ENCODE measurements at regions of chr6 and their contacts with region 1.

Region 1: GRCh38 chr6:79196912-79197311 is 37.6 kb downstream of the HMGN3 start:
- H3K4me3 Mint-ChIP-seq: no peak overlapping the region
- H3K27ac Mint-ChIP-seq: peak overlapping the region; percentile 25
- H3K4me1 Mint-ChIP-seq: peaks cover 13% of the 10 kb centered on the region
- H3K27me3 Mint-ChIP-seq: no peaks in the 10 kb centered on the region

Region 2: DNA sequence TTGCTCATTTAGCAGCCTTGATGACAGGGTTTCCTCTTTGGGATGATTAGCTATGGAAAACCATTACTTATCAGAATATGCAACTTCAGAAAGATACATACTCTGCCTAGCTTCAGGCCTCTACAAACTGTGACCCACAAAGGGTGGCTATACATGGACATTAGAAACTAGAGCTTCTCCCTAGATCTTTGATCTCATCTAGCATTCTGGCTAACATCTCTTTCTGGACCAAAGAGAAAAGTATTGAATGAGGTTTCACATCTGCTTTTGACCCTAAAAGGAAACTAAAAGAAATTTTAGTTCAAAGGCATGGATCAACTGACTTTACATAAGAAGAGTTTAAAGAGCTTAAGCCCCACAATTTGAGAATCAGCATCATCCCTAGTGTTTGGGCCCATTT is 50.0 kb after region 1 on chr6:
- intact Hi-C with region 1: no loop called
- H3K4me3 Mint-ChIP-seq: no peak overlapping the region
- H3K27ac Mint-ChIP-seq: no peak overlapping the region
- H3K4me1 Mint-ChIP-seq: peaks cover 12% of the 10 kb centered on the region
- H3K27me3 Mint-ChIP-seq: no peaks in the 10 kb centered on the region

Region 3: DNA sequence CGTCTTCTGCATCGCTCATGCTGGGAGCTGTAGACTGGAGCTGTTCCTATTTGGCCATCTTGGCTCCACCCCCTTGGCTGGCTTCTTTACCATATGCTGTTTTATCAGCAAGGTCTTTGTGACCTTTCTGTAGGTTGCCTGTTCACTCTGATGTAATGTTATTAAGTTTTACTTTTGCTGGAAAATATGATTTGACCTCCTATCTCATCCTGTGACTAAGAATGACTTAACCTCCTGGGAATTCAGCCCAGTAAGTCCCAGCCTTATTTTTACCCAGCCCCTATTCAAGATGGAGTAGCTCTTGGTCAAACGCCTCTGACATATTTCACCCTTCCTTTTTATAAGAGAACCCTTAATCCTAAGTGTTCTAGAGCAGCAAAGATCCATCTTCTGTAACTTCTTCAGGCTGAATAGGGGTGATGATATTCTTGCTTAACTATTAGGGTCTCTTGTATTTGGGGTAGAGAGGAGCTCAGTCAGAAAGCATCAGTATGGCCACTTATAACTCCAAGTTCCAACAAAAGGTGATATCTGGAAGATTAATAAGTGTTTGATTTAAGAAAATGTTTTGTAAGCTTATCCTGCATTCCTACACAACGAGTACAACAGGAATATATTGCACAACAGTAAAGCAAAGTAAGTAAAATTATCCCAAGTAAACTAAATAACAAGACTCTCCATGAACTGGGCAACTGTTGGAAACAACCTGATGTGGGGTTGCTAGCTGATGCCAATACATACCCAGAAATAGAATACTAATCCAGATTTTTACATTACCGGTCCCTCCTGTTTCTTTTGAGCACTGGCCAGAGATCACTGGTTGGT is 60.7 kb after region 1 on chr6:
- intact Hi-C with region 1: loop called (anchors 2 kb)
- H3K4me3 Mint-ChIP-seq: no peak overlapping the region
- H3K27ac Mint-ChIP-seq: no peak overlapping the region
- H3K4me1 Mint-ChIP-seq: no peaks in the 10 kb centered on the region
- H3K27me3 Mint-ChIP-seq: no peaks in the 10 kb centered on the region